HepG2 (cell line): ENCODE measurements at regions of chr6 and their contacts with region 1.

Region 1: DNA sequence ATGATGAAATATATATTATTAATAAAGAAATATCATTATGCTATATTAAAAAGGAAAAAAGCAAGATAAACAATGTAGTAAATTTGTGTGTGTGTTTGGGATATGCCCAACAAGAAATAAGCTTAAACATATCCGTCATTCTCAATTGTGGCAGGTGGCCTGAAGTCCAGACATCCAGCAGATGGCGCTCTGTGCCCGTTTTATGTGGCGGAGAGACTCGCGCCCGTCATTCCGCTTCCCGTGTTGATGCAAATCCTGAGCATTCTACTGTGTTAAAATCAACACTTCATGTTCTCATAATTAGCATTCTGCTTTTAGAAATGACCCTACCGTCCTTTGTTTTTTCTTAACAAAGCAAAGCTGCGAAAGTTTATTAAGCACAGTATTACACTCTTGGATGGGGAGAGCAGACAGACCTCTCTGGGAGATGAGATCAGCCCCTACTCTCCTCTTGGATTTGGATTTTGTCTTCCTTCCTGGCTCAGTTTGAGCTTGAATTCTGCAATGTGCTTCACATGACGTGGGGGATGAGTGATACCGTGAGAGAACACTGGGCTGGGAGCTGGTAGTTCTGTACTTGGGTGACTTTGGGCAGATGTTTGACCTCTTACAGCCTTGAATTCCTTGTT is 125.8 kb downstream of the MCHR2 start:
- DNase-seq: peak; percentile 47
- ATAC-seq: peak; percentile 94
- H3K4me3 ChIP-seq: no peak overlapping the region; a peak in 1 of 6 replicates
- H3K27ac ChIP-seq: no peak overlapping the region
- H3K4me1 ChIP-seq: no peaks in the 10 kb centered on the region
- H3K27me3 ChIP-seq: peaks cover 0 to 18% of the 10 kb centered on the region in 2 experiments; a peak in 2 of 5 replicates
- CTCF ChIP-seq: peak; percentile 88
- EP300 ChIP-seq: no peak
- POLR2A ChIP-seq: no peak
- RAD21 ChIP-seq: 0 out of 2 replicates have a peak, but pooled peaks have one; percentile 27

Region 2: GRCh38 chr6:99905209-99906106 is 37.3 kb after region 1 on chr6:
- CTCF ChIA-PET with region 1: interaction called, 9 read pairs
- POLR2A ChIA-PET with region 1: no interaction called
- in situ Hi-C with region 1: no loop called
- intact Hi-C with region 1: loop called (anchors 1 kb)
- DNase-seq: peak; percentile 46
- ATAC-seq: peak; percentile 90
- H3K4me3 ChIP-seq: no peak overlapping the region
- H3K27ac ChIP-seq: no peak overlapping the region
- H3K4me1 ChIP-seq: no peaks in the 10 kb centered on the region
- H3K27me3 ChIP-seq: no peaks in the 10 kb centered on the region; a peak in 1 of 5 replicates
- CTCF ChIP-seq: peak; percentile 50
- EP300 ChIP-seq: no peak
- POLR2A ChIP-seq: no peak
- RAD21 ChIP-seq: no peak

Region 3: GRCh38 chr6:100099189-100100074 is 231.2 kb after region 1 on chr6:
- CTCF ChIA-PET with region 1: interaction called, 14 read pairs
- POLR2A ChIA-PET with region 1: no interaction called
- in situ Hi-C with region 1: loop called (anchors 5 kb)
- intact Hi-C with region 1: no loop called
- DNase-seq: peak; percentile 27
- ATAC-seq: peak; percentile 51; the same call in 2 of the 3 replicates
- H3K4me3 ChIP-seq: no peak overlapping the region
- H3K27ac ChIP-seq: no peak overlapping the region
- H3K4me1 ChIP-seq: no peaks in the 10 kb centered on the region
- H3K27me3 ChIP-seq: no peaks in the 10 kb centered on the region
- CTCF ChIP-seq: peak; percentile 48; the same call in 1 of the 2 replicates
- EP300 ChIP-seq: no peak
- POLR2A ChIP-seq: no peak
- RAD21 ChIP-seq: no peak

Region 4: GRCh38 chr6:100657678-100658330 is 789.6 kb after region 1 on chr6:
- CTCF ChIA-PET with region 1: no interaction called
- POLR2A ChIA-PET with region 1: no interaction called
- in situ Hi-C with region 1: no loop called
- intact Hi-C with region 1: loop called (anchors 10 kb)
- DNase-seq: no peak
- ATAC-seq: 0 out of 3 replicates have a peak, but pooled peaks have one; percentile 41
- H3K4me3 ChIP-seq: no peak overlapping the region
- H3K27ac ChIP-seq: no peak overlapping the region
- H3K4me1 ChIP-seq: no peaks in the 10 kb centered on the region
- H3K27me3 ChIP-seq: no peaks in the 10 kb centered on the region
- CTCF ChIP-seq: peak; percentile 31; the same call in 1 of the 2 replicates
- EP300 ChIP-seq: no peak
- POLR2A ChIP-seq: no peak
- RAD21 ChIP-seq: no peak